ENCODE measurements at regions of chr20 and their contacts with region 1.

Region 1: DNA sequence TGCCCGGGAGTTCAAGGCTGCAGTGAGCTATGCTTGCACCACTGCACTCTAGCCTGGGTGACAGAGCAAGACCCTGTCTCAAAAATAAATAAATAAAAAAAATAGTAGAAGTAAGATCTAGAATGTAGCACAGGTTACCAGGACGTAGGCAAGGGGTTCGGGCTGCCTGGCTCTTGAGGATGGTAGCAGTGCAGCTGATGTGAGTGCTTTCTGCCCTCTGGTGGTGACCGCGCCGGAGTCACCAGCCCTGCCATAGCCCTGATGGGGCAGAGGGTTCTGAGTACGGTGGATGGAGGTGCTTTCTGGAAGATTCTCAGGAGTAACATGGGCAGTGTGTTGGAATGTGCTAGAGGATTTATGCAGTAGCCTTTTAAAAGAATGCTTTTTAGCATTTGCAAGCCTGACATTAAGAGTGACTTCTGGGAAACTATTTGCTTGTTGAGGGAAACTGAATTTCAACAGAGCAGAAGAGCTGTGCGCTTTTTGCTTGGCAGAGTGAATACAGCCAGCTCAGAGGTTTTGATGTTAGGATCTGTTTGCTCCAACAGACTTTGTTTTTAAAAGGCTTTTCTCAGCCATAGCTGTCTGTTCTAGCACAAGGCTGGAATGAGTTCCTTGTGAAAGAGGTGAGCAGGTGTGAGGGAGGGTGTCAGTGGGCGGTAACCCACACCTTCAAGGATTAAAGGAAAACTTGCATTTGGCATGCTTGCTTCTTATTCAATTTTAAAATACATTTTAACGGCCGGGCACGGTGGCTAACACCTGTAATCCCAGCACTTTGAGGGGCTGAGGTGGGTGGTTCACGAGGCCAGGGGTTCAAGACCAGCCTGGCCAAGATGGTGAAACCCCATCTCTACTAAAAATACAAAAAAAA is 65.9 kb downstream of the PTPN1 start:
- DNase-seq: peak; percentile 61
- H3K4me3 ChIP-seq: no peak overlapping the region
- H3K27ac ChIP-seq: no peak overlapping the region
- H3K4me1 ChIP-seq: peaks cover 28% of the 10 kb centered on the region
- H3K27me3 ChIP-seq: no peaks in the 10 kb centered on the region
- CTCF ChIP-seq: peak; percentile 81 to 82
- POLR2A ChIP-seq: no peak

Region 2: DNA sequence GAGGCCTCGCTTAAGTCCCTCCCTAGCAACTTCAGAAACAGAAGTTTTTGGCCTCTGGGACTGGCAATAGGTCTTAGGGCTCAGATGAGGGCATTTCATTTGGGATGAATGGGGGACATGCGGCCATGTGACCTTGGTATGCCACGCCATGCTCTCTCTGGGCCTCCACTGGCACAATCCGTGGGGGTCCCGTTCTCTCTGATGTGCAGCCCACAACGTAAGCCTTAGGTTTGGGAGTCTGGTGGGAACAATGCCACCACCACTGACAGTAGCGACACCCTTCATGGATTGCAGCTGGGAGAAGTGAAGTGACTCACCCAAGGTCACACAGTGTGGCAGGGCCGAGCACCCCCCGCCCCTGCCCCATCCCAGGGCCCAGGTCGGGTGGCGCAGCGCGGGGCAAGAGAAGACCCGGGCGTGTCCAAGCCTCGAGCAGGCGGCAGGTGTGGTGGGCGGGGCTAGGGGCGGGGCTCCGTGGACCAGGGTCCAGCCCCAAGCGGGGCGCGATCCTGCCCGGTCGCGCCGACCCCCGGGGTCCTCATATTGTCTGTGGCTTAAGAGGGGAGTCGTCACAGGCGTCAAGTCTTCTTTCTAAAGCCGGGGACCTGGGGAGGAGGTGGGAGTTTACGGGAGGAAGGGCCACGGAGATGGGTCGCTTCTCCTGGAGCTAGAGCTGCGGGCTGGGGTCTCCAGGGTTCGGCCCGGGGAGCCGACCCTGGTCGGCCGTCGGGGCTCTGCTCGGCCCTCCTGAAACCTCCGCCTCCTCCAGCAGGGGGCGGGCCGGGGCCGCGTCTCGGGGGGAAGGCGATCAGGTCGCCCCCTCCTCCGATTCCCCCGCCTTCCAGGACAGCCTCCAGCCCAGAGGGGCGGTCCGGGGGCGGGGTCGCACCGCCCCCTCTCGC is 386.2 kb before region 1 on chr20:
- CTCF ChIA-PET with region 1: interaction called, 10 read pairs
- POLR2A ChIA-PET with region 1: interaction called, 3 read pairs
- dilution Hi-C with region 1: no loop called
- intact Hi-C with region 1: loop called (anchors 1 kb)
- DNase-seq: peak; percentile 71
- H3K4me3 ChIP-seq: peak overlapping the region; percentile 24 to 60 (median 42)
- H3K27ac ChIP-seq: no peak overlapping the region
- H3K4me1 ChIP-seq: peaks cover 12% of the 10 kb centered on the region
- H3K27me3 ChIP-seq: peaks cover 0 to 2% of the 10 kb centered on the region in 2 experiments
- CTCF ChIP-seq: peak; percentile 54 to 88
- POLR2A ChIP-seq: no peak

Region 3: GRCh38 chr20:50460460-50461267 is 115.4 kb before region 1 on chr20:
- CTCF ChIA-PET with region 1: interaction called, 13 read pairs
- POLR2A ChIA-PET with region 1: no interaction called
- dilution Hi-C with region 1: no loop called
- intact Hi-C with region 1: loop called (anchors 1 kb)
- DNase-seq: peak; percentile 84
- H3K4me3 ChIP-seq: no peak overlapping the region
- H3K27ac ChIP-seq: no peak overlapping the region
- H3K4me1 ChIP-seq: no peaks in the 10 kb centered on the region
- H3K27me3 ChIP-seq: no peaks in the 10 kb centered on the region
- CTCF ChIP-seq: peak; percentile 88 to 90
- POLR2A ChIP-seq: no peak

Region 4: GRCh38 chr20:50478162-50479036 is 97.7 kb before region 1 on chr20:
- CTCF ChIA-PET with region 1: interaction called, 22 read pairs
- POLR2A ChIA-PET with region 1: no interaction called
- dilution Hi-C with region 1: no loop called
- intact Hi-C with region 1: loop called (anchors 1 kb)
- DNase-seq: no peak
- H3K4me3 ChIP-seq: no peak overlapping the region
- H3K27ac ChIP-seq: no peak overlapping the region
- H3K4me1 ChIP-seq: peaks cover 15% of the 10 kb centered on the region
- H3K27me3 ChIP-seq: no peaks in the 10 kb centered on the region
- CTCF ChIP-seq: peak; percentile 57 to 66
- POLR2A ChIP-seq: no peak

Region 5: DNA sequence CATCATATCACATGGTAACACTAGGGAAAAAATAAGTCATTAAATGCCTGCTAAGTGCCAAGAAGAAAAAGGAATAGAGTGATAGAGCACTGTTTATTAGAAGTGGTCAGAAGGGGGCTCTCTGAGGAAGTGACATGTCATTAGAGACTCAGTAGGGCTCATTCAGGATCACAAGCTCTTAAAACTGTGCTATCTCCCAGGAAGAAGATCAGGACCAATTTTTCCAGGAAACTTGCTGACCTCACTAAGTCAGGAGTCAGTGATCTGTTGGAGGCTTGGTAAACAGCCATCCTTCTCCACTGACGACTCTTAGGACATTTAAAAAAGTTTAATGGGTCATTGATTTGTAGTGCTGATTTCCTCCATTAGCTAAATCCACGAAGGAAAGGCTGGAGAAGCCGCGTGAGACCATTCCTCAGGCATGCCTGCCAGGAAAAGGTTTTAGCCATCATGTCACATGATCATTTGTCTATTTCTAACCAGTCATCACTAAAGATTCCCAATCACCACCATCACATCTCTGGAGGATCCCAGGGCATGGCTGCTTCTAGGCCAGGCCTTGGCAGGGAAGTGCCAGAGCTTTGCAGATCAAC is 71.8 kb before region 1 on chr20:
- CTCF ChIA-PET with region 1: interaction called, 133 read pairs
- POLR2A ChIA-PET with region 1: no interaction called
- dilution Hi-C with region 1: no loop called
- intact Hi-C with region 1: no loop called
- DNase-seq: peak; percentile 61
- H3K4me3 ChIP-seq: no peak overlapping the region
- H3K27ac ChIP-seq: no peak overlapping the region
- H3K4me1 ChIP-seq: peaks cover 3% of the 10 kb centered on the region
- H3K27me3 ChIP-seq: no peaks in the 10 kb centered on the region
- CTCF ChIP-seq: peak in 1 of 2 donors; percentile 6
- POLR2A ChIP-seq: no peak

Region 6: DNA sequence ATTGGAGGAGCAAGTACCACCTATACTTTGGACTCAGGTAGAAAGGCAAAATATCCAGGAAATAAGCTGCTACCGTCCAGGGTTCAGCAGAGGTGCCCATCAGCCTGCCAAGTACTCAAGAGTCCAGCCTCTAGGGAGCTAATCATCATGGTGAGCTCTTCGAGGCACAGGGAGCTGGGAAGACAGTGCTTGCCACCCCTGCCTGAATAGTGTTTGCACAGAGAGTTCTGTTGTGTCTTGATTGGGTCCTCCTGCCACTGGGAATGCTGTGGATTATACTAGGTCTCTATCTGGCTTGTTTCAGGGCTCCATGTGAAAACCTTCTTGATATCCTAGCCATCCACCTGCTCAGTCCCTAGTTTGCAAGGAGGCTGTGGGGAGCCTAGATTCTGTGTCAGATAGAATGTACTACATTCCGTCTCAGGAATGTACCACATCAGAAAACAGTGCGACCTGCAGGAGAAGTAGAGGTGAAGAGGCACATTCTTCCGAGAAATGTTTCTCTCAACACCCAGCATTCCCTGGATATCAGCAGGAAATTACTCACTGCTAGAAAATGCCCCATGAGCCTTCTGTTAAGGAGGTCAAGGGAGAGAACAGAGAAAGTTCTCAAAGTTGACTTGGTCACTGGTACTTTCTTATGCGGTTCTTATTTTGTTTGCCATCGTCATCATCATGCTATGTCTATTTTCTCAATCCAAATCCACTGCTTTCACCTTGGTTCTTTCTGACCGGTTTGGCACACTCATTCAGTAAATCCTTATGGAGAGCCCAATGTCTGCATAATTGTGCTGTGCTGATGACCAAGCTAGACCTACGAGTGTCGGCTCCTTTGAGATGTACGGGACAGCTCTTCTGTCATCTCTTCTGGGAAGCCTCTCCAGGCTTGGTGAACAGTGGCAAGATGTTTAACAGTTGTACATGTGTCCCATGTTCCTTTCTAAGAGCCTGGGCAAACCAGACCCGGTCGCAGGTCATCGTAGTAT is 35.2 kb before region 1 on chr20:
- CTCF ChIA-PET with region 1: interaction called, 8 read pairs
- POLR2A ChIA-PET with region 1: interaction called, 8 read pairs
- dilution Hi-C with region 1: no loop called
- intact Hi-C with region 1: loop called (anchors 1 kb)
- DNase-seq: peak; percentile 94
- H3K4me3 ChIP-seq: peak overlapping the region in 1 of 3 experiments; percentile 34
- H3K27ac ChIP-seq: peak overlapping the region; percentile 98
- H3K4me1 ChIP-seq: peaks cover 51% of the 10 kb centered on the region
- H3K27me3 ChIP-seq: no peaks in the 10 kb centered on the region
- CTCF ChIP-seq: peak; percentile 10 to 14
- POLR2A ChIP-seq: peak; percentile 71

Region 7: GRCh38 chr20:50635667-50636503 is 59.8 kb after region 1 on chr20:
- CTCF ChIA-PET with region 1: no interaction called
- POLR2A ChIA-PET with region 1: no interaction called
- dilution Hi-C with region 1: no loop called
- intact Hi-C with region 1: no loop called
- DNase-seq: peak; percentile 54
- H3K4me3 ChIP-seq: no peak overlapping the region
- H3K27ac ChIP-seq: no peak overlapping the region
- H3K4me1 ChIP-seq: no peaks in the 10 kb centered on the region
- H3K27me3 ChIP-seq: no peaks in the 10 kb centered on the region
- CTCF ChIP-seq: peak; percentile 98 to 99
- POLR2A ChIP-seq: no peak

Region 8: GRCh38 chr20:50958615-50959542 is 382.8 kb after region 1 on chr20 and contains the start of gene MOCS3:
- CTCF ChIA-PET with region 1: no interaction called
- POLR2A ChIA-PET with region 1: no interaction called
- dilution Hi-C with region 1: no loop called
- intact Hi-C with region 1: no loop called
- DNase-seq: peak; percentile 94
- H3K4me3 ChIP-seq: peak within 1 kb of the TSS; percentile 55 to 94 (median 80)
- H3K27ac ChIP-seq: peak within 1 kb of the TSS; percentile 96
- H3K4me1 ChIP-seq: peaks cover 24% of the 10 kb centered on the region
- H3K27me3 ChIP-seq: no peaks in the 10 kb centered on the region
- CTCF ChIP-seq: no peak
- POLR2A ChIP-seq: no peak
- total RNA-seq, gene MOCS3: 3.6 and 4.2 TPM in 2 replicates